ENCODE measurements at regions of chr4 and their contacts with region 1.

Region 1: GRCh38 chr4:183074296-183074990 is 24.6 kb upstream of the WWC2 start:
- DNase-seq: no peak
- ATAC-seq: no peak
- H3K4me3 ChIP-seq: no peak overlapping the region
- H3K27ac ChIP-seq: no peak overlapping the region
- H3K4me1 ChIP-seq: no peaks in the 10 kb centered on the region
- H3K27me3 ChIP-seq: no peaks in the 10 kb centered on the region
- CTCF ChIP-seq: no peak
- POLR2A ChIP-seq: no peak

Region 2: GRCh38 chr4:183098723-183099536 is 24.5 kb after region 1 on chr4 and contains the start of gene WWC2:
- in situ Hi-C with region 1: no loop called
- intact Hi-C with region 1: no loop called
- DNase-seq: peak; percentile 68 to 72
- ATAC-seq: peak; percentile 82 to 86
- H3K4me3 ChIP-seq: peak within 1 kb of the TSS; percentile 80 to 91 (median 86)
- H3K27ac ChIP-seq: peak within 1 kb of the TSS; percentile 79 to 88 (median 85)
- H3K4me1 ChIP-seq: peaks cover 13 to 15% of the 10 kb centered on the region in 2 donors
- H3K27me3 ChIP-seq: no peaks in the 10 kb centered on the region
- CTCF ChIP-seq: no peak
- POLR2A ChIP-seq: peak; percentile 47 to 69
- total RNA-seq, gene WWC2: 4.5 to 10.7 (median 8.6) TPM

Region 3: GRCh38 chr4:183256756-183257385 is 182.4 kb after region 1 on chr4:
- in situ Hi-C with region 1: loop called (anchors 5 kb)
- intact Hi-C with region 1: loop called (anchors 1 kb)
- DNase-seq: peak in 1 of 2 donors; percentile 10
- ATAC-seq: no peak
- H3K4me3 ChIP-seq: no peak overlapping the region
- H3K27ac ChIP-seq: no peak overlapping the region
- H3K4me1 ChIP-seq: no peaks in the 10 kb centered on the region
- H3K27me3 ChIP-seq: no peaks in the 10 kb centered on the region
- CTCF ChIP-seq: peak in 4 of 5 experiments; percentile 2 to 70 (median 66)
- POLR2A ChIP-seq: no peak

Region 4: GRCh38 chr4:183261953-183262775 is 187.7 kb after region 1 on chr4:
- in situ Hi-C with region 1: loop called (anchors 5 kb)
- intact Hi-C with region 1: loop called (anchors 1 kb)
- DNase-seq: peak; percentile 35 to 67
- ATAC-seq: peak; percentile 86 to 88
- H3K4me3 ChIP-seq: no peak overlapping the region
- H3K27ac ChIP-seq: peak overlapping the region in 3 of 4 donors; percentile 4 to 59 (median 42)
- H3K4me1 ChIP-seq: peaks cover 0 to 4% of the 10 kb centered on the region in 2 donors
- H3K27me3 ChIP-seq: no peaks in the 10 kb centered on the region
- CTCF ChIP-seq: peak; percentile 66 to 80 (median 73)
- POLR2A ChIP-seq: no peak

Region 5: DNA sequence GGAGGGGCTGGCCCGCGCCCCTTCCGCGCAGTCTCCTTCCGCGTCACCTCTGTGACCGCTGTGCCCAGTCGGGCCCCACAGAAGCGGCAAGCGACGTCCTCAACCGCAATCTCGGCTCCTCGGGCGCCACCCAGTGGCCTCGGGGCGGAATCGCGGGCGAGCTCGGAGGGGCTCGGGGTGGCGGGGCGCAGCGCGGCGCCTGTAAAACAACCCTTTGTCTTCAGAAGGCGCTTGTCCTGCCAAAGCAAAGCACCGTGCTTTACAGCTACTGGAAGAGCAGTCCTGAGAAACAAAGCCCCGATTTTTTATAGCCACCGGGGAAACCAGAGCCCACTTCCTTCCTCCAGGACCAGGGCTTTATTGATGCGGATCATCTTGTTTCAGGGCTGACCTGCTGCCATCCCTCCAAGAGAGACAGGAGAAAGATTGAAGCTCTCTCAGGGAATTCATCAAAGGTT is 332.7 kb after region 1 on chr4:
- in situ Hi-C with region 1: loop called in 1 of 4 experiments (anchors 25 kb)
- intact Hi-C with region 1: no loop called
- DNase-seq: peak; percentile 42 to 56
- ATAC-seq: peak; percentile 93 to 96
- H3K4me3 ChIP-seq: peak overlapping the region; percentile 49 to 56 (median 52)
- H3K27ac ChIP-seq: peak overlapping the region in 1 of 4 donors; percentile 15
- H3K4me1 ChIP-seq: no peaks in the 10 kb centered on the region
- H3K27me3 ChIP-seq: no peaks in the 10 kb centered on the region
- CTCF ChIP-seq: peak; percentile 65 to 95 (median 85)
- POLR2A ChIP-seq: no peak

Region 6: DNA sequence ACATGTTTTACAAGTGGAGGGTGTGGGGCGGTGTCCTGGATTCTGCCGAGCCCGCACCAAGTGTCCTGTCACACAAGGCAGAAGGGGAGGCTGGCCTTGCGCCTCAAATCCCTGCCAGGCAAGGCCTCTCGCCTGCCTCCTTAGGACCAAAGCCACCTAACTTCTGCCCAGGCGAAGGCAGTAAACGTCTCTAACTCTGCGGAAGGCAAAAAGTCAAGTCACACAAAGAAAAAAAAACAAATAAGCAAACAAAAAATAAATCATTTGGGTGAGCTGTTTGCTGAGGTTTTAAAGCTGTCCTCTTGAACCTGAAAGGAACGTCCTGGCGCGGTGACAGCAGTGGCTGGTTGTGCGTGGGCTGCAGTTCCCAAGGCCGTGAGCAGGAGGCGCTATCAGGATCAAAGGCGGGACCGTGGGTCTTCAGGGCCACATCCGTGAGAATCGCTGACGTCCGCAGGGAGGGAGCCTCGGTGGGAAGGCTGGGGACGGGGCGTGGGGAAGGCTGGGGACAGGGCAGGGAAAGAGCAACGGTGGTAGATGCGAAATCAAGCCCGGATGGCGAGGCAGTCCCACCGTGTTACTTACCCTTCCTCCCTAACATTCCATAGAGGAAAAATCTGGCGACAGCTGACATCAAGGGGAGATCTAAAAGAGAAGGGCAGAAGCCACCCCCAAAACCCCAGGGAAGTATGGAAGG is 683.8 kb after region 1 on chr4:
- in situ Hi-C with region 1: no loop called
- intact Hi-C with region 1: no loop called
- DNase-seq: no peak
- ATAC-seq: no peak
- H3K4me3 ChIP-seq: peak overlapping the region in 1 of 4 donors; percentile 7
- H3K27ac ChIP-seq: peak overlapping the region in 1 of 4 donors; percentile 13
- H3K4me1 ChIP-seq: no peaks in the 10 kb centered on the region
- H3K27me3 ChIP-seq: no peaks in the 10 kb centered on the region
- CTCF ChIP-seq: no peak
- POLR2A ChIP-seq: no peak